ENCODE measurements at regions of chr1 and their contacts with region 1.

Region 1: GRCh38 chr1:192506741-192507155 is 68.8 kb upstream of the RGS1 start:
- DNase-seq: peak; percentile 23
- ATAC-seq: no peak
- H3K4me3 Mint-ChIP-seq: no peak overlapping the region
- H3K27ac Mint-ChIP-seq: no peak overlapping the region
- H3K4me1 Mint-ChIP-seq: peaks cover 2% of the 10 kb centered on the region
- H3K27me3 Mint-ChIP-seq: no peaks in the 10 kb centered on the region

Region 2: DNA sequence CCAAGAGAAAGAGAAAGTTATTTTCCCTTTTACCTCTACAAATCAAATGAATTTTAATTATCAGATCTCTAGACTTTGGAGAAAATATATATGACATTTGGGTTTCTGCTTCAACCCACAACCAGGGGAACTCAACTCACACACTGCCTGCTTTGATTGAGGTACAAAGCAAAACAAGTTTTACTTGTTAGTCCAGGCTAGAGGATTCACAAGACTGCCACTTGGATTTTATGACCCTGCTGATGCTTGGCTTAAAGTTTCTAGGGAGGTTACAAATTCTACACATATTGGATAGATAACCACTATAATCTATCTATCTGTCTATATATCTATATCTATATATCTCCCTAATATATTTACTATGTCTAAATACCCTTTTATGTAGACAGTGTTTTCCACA is 815.8 kb before region 1 on chr1:
- CTCF ChIA-PET with region 1: no interaction called
- POLR2A ChIA-PET with region 1: no interaction called
- intact Hi-C with region 1: no loop called
- DNase-seq: no peak
- ATAC-seq: no peak
- H3K4me3 Mint-ChIP-seq: no peak overlapping the region
- H3K27ac Mint-ChIP-seq: no peak overlapping the region
- H3K4me1 Mint-ChIP-seq: no peaks in the 10 kb centered on the region
- H3K27me3 Mint-ChIP-seq: no peaks in the 10 kb centered on the region

Region 3: GRCh38 chr1:192609110-192610079 is 102.6 kb after region 1 on chr1:
- CTCF ChIA-PET with region 1: interaction called, 3 read pairs
- POLR2A ChIA-PET with region 1: no interaction called
- intact Hi-C with region 1: loop called in 1 of 2 experiments (anchors 1 kb)
- DNase-seq: peak; percentile 78
- ATAC-seq: peak; percentile 100
- H3K4me3 Mint-ChIP-seq: peak overlapping the region; percentile 35
- H3K27ac Mint-ChIP-seq: peak overlapping the region; percentile 69
- H3K4me1 Mint-ChIP-seq: peaks cover 19% of the 10 kb centered on the region
- H3K27me3 Mint-ChIP-seq: no peaks in the 10 kb centered on the region

Measured in activated CD4-positive, alpha-beta T cell treated with anti-CD3 and anti-CD28 coated beads for 36 hours (primary cell).